ENCODE measurements at regions of chr13 and their contacts with region 1.

Region 1: DNA sequence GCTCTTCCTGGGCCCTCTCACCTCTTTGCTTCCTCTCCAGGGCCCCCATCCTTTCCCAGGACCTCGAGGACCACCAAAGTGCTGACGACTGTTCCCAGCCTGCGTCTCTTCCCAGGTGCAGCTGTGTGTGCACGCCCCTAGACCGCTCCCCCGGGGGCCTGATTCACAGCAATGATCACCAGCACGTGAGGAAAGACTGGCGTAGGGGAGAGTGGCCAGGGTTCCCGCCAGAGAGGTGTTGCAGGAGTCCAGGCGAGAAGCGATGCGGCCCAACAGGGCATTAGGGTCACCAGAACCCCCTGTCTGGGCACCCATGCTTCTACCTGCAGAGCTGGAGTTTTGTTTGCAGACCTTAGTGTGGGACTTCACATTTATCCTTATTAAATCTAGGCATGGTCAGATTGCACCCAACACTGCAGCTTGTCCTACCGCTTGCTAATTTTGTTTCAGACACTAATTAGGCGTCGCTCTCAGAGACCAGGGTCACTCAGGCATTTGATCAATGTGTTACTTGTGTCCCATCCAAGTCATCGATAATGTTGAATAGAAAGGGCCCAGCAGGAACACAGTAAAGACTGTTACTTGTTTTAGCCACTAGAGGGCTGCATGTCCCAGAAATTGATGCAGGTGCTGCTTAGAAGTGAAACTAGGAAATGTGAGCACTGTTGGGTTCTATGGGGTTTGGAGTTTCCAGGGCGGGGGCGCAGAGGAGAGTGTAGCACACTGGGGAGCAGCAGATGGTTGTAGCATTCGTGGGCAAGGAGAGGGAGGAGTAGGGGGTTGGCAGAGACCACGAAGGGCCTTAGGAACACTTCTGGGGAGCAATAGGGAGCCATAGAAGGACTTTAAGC is 53.2 kb downstream of the CDADC1 start:
- DNase-seq: peak; percentile 41 to 88
- H3K4me3 ChIP-seq: peak overlapping the region; percentile 15 to 34 (median 28)
- H3K27ac ChIP-seq: peak overlapping the region in 4 of 5 donors; percentile 48 to 92 (median 72)
- H3K4me1 ChIP-seq: peaks cover 26 to 64% (median 52%) of the 10 kb centered on the region in 4 donors
- H3K27me3 ChIP-seq: no peaks in the 10 kb centered on the region
- CTCF ChIP-seq: peak in 5 of 7 experiments; percentile 81 to 93 (median 86)
- EP300 ChIP-seq: no peak
- POLR2A ChIP-seq: no peak

Region 2: GRCh38 chr13:49400755-49401659 is 100.0 kb after region 1 on chr13:
- intact Hi-C with region 1: no loop called
- DNase-seq: peak; percentile 45 to 90
- H3K4me3 ChIP-seq: peak overlapping the region; percentile 36 to 48 (median 43)
- H3K27ac ChIP-seq: peak overlapping the region; percentile 59 to 90 (median 85)
- H3K4me1 ChIP-seq: peaks cover 0 to 34% (median 11%) of the 10 kb centered on the region in 4 donors
- H3K27me3 ChIP-seq: no peaks in the 10 kb centered on the region
- CTCF ChIP-seq: no peak
- EP300 ChIP-seq: no peak
- POLR2A ChIP-seq: peak in 1 of 4 donors; percentile 20

Region 3: GRCh38 chr13:49436890-49437289 is 135.9 kb after region 1 on chr13:
- intact Hi-C with region 1: loop called (anchors 5 kb)
- DNase-seq: peak in 1 of 2 donors; percentile 62
- H3K4me3 ChIP-seq: no peak overlapping the region
- H3K27ac ChIP-seq: peak overlapping the region in 1 of 5 donors; percentile 37
- H3K4me1 ChIP-seq: no peaks in the 10 kb centered on the region
- H3K27me3 ChIP-seq: no peaks in the 10 kb centered on the region
- CTCF ChIP-seq: peak in 4 of 7 experiments; percentile 8 to 43 (median 22)
- EP300 ChIP-seq: no peak
- POLR2A ChIP-seq: no peak